CD4-positive, alpha-beta T cell (primary cell): ENCODE measurements at regions of chr3 and their contacts with region 1.

Region 1: GRCh38 chr3:140972833-140973232 is 31.2 kb downstream of the SLC25A36 start:
- DNase-seq: peak in 3 of 14 experiments; percentile 8 to 22 (median 11)
- ATAC-seq: peak; percentile 42
- H3K4me3 ChIP-seq: no peak overlapping the region
- H3K4me3 Mint-ChIP-seq: no peak overlapping the region
- H3K27ac ChIP-seq: no peak overlapping the region
- H3K27ac Mint-ChIP-seq: no peak overlapping the region
- H3K4me1 ChIP-seq: no peaks in the 10 kb centered on the region
- H3K4me1 Mint-ChIP-seq: peaks cover 15% of the 10 kb centered on the region
- H3K27me3 ChIP-seq: no peaks in the 10 kb centered on the region
- H3K27me3 Mint-ChIP-seq: no peaks in the 10 kb centered on the region
- CTCF ChIP-seq: no peak

Region 2: GRCh38 chr3:140898340-140899180 is 74.3 kb before region 1 on chr3:
- CTCF ChIA-PET with region 1: interaction called, 3 read pairs
- POLR2A ChIA-PET with region 1: no interaction called
- intact Hi-C with region 1: loop called in 1 of 2 experiments (anchors 2 kb)
- DNase-seq: peak in 4 of 14 experiments; percentile 12 to 62 (median 55)
- ATAC-seq: peak; percentile 69
- H3K4me3 ChIP-seq: no peak overlapping the region
- H3K4me3 Mint-ChIP-seq: no peak overlapping the region
- H3K27ac ChIP-seq: no peak overlapping the region
- H3K27ac Mint-ChIP-seq: no peak overlapping the region
- H3K4me1 ChIP-seq: no peaks in the 10 kb centered on the region
- H3K4me1 Mint-ChIP-seq: no peaks in the 10 kb centered on the region
- H3K27me3 ChIP-seq: peaks cover 9 to 15% of the 10 kb centered on the region in 2 experiments
- H3K27me3 Mint-ChIP-seq: peaks cover 32% of the 10 kb centered on the region
- CTCF ChIP-seq: peak; percentile 67

Region 3: GRCh38 chr3:140922634-140923033 is 50.2 kb before region 1 on chr3:
- CTCF ChIA-PET with region 1: no interaction called
- POLR2A ChIA-PET with region 1: no interaction called
- intact Hi-C with region 1: loop called (anchors 5 to 10 kb)
- DNase-seq: peak in 3 of 14 experiments; percentile 21 to 39 (median 28)
- ATAC-seq: peak; percentile 68
- H3K4me3 ChIP-seq: no peak overlapping the region
- H3K4me3 Mint-ChIP-seq: no peak overlapping the region
- H3K27ac ChIP-seq: no peak overlapping the region
- H3K27ac Mint-ChIP-seq: no peak overlapping the region
- H3K4me1 ChIP-seq: no peaks in the 10 kb centered on the region
- H3K4me1 Mint-ChIP-seq: no peaks in the 10 kb centered on the region
- H3K27me3 ChIP-seq: peaks cover 0 to 6% of the 10 kb centered on the region in 2 experiments
- H3K27me3 Mint-ChIP-seq: peaks cover 22% of the 10 kb centered on the region
- CTCF ChIP-seq: peak; percentile 43